ENCODE measurements at regions of chr1 and their contacts with region 1.

Region 1: DNA sequence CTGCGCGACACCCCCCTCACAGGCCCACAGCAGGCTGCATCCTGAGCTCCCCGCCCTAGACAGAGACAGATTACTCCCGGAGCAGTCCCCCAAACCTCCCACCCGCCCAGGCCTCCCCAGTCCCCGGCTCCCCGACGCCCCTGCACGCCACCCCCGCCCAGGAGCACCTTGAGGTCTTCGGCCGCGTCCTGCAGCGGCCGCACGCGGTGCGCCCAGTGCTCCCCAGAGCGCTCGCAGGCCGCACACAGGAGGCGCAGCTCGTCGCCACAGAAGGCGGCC is 709 bp downstream of the TRIM11 start:
- DNase-seq: no peak
- H3K4me3 Mint-ChIP-seq: peak overlapping the region; percentile 98
- H3K27ac Mint-ChIP-seq: peak overlapping the region; percentile 94
- H3K4me1 Mint-ChIP-seq: peaks cover 49% of the 10 kb centered on the region
- H3K27me3 Mint-ChIP-seq: no peaks in the 10 kb centered on the region

Region 2: GRCh38 chr1:228082135-228082891 is 323.6 kb before region 1 on chr1 and contains the start of gene ARF1:
- intact Hi-C with region 1: loop called (anchors 5 kb)
- DNase-seq: peak; percentile 98
- H3K4me3 Mint-ChIP-seq: peak within 1 kb of the TSS; percentile 97
- H3K27ac Mint-ChIP-seq: peak within 1 kb of the TSS; percentile 93
- H3K4me1 Mint-ChIP-seq: peaks cover 39% of the 10 kb centered on the region
- H3K27me3 Mint-ChIP-seq: no peaks in the 10 kb centered on the region
- total RNA-seq, gene ARF1: 388 and 395 TPM in 2 replicates

Region 3: DNA sequence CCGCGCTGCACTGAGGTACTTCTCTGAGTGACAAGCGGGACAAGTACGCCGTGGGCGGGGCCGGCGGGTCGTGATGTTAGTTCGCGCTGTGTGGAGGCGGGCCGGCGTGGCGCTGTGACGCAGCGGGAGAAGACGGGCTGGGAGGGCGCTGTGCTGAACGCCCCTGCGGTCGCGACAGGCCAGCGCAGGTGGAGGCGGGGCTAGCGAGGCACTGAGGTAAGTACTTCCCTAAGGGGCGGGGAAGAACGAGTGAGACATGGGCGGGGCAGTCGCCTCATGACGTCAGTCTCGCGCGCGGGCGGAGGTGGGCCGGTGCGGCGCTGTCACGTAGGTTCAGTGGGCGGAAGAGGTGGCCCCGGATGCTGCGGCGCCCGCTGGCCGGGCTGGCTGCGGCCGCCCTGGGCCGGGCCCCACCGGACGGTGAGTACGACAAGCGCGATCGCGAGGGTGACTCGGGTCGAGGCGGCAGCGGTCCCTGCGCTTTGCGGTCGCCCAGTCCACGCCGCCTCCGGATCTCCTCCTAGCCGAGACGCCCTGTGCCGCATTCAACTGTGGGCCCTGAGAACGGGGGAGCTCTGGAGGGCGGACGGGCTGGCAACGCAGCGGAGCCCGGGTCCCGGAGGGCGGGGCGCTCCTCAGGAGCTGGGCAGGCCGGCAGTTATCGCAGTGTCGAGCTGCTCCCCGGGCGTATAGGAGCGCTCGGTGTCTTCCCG is 265.8 kb before region 1 on chr1 and contains the start of gene GUK1:
- intact Hi-C with region 1: loop called (anchors 5 kb)
- DNase-seq: peak; percentile 100
- H3K4me3 Mint-ChIP-seq: peak within 1 kb of the TSS; percentile 98
- H3K27ac Mint-ChIP-seq: peak within 1 kb of the TSS; percentile 97
- H3K4me1 Mint-ChIP-seq: peaks cover 26% of the 10 kb centered on the region
- H3K27me3 Mint-ChIP-seq: peaks cover 29% of the 10 kb centered on the region
- total RNA-seq, gene GUK1: 211 and 222 TPM in 2 replicates

Region 4: GRCh38 chr1:228236744-228237143 is 169.2 kb before region 1 on chr1:
- intact Hi-C with region 1: no loop called
- DNase-seq: peak; percentile 65
- H3K4me3 Mint-ChIP-seq: no peak overlapping the region
- H3K27ac Mint-ChIP-seq: no peak overlapping the region
- H3K4me1 Mint-ChIP-seq: no peaks in the 10 kb centered on the region
- H3K27me3 Mint-ChIP-seq: no peaks in the 10 kb centered on the region

Region 5: GRCh38 chr1:228275739-228276421 is 130.0 kb before region 1 on chr1:
- intact Hi-C with region 1: loop called (anchors 10 kb)
- DNase-seq: peak; percentile 96
- H3K4me3 Mint-ChIP-seq: peak overlapping the region; percentile 80
- H3K27ac Mint-ChIP-seq: peak overlapping the region; percentile 34
- H3K4me1 Mint-ChIP-seq: peaks cover 6% of the 10 kb centered on the region
- H3K27me3 Mint-ChIP-seq: no peaks in the 10 kb centered on the region

Region 6: GRCh38 chr1:228464487-228464983 is 58.6 kb after region 1 on chr1:
- intact Hi-C with region 1: loop called (anchors 1 kb)
- DNase-seq: peak; percentile 97
- H3K4me3 Mint-ChIP-seq: peak overlapping the region; percentile 87
- H3K27ac Mint-ChIP-seq: peak overlapping the region; percentile 88
- H3K4me1 Mint-ChIP-seq: peaks cover 50% of the 10 kb centered on the region
- H3K27me3 Mint-ChIP-seq: peaks cover 12% of the 10 kb centered on the region

Region 7: GRCh38 chr1:228500901-228501871 is 95.3 kb after region 1 on chr1:
- intact Hi-C with region 1: loop called (anchors 2 kb)
- DNase-seq: peak; percentile 95
- H3K4me3 Mint-ChIP-seq: peak overlapping the region; percentile 77
- H3K27ac Mint-ChIP-seq: peak overlapping the region; percentile 42
- H3K4me1 Mint-ChIP-seq: peaks cover 20% of the 10 kb centered on the region
- H3K27me3 Mint-ChIP-seq: no peaks in the 10 kb centered on the region

Region 8: DNA sequence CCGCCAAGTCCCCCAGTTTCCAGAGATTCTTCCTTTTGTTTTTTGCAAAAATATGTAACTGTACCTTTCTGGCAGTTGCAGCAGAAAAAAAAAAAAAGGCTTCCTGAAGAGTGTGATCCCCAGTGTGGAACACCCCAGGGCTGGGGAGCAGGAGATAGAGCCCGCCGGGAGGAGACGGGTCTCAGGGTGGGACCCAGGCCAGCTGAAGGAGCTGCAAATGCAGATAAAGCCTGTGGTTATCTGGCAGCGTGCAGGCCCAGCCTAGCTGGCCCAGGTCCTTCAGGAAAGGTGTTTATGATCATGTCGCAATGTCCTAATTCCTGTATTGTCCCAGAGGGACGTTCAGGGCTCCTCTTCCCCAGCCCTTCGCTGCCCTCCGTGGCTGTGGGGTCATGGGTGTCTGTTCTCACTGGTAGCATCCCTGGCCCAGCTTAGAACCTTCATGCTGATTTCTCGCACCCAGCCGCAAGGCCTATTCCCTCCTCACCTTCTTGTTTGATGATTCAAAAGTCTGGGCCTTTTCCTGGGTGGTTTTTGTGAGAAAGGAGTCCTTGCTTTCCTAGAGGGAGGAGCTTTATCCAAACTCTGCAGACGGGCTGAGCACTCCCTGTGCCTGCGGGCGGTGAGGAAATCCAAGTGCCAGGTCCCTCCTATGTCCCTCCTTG is 107.4 kb after region 1 on chr1:
- intact Hi-C with region 1: no loop called
- DNase-seq: no peak
- H3K4me3 Mint-ChIP-seq: no peak overlapping the region
- H3K27ac Mint-ChIP-seq: no peak overlapping the region
- H3K4me1 Mint-ChIP-seq: peaks cover 24% of the 10 kb centered on the region
- H3K27me3 Mint-ChIP-seq: peaks cover 41% of the 10 kb centered on the region

Measured in activated CD4-positive, alpha-beta T cell treated with anti-CD3 and anti-CD28 coated beads, Interleukin-2, amount 10 ng/mL, durations not matched to agents 24 days and 14 days (primary cell).